ENCODE measurements at regions of chr2 and their contacts with region 1.

Region 1: GRCh38 chr2:213151437-213152064 is at the start of gene IKZF2:
- DNase-seq: peak; percentile 93
- H3K4me3 ChIP-seq: peak within 1 kb of the TSS; percentile 78 to 94 (median 88)
- H3K27ac ChIP-seq: peak within 1 kb of the TSS; percentile 94 to 99 (median 97)
- H3K4me1 ChIP-seq: peaks cover 6 to 32% (median 30%) of the 10 kb centered on the region in 4 donors
- H3K27me3 ChIP-seq: no peaks in the 10 kb centered on the region
- CTCF ChIP-seq: no peak
- EP300 ChIP-seq: no peak
- POLR2A ChIP-seq: no peak
- total RNA-seq, gene IKZF2: 6.5 to 11.2 (median 8.8) TPM

Region 2: GRCh38 chr2:212686285-212686895 is 465.2 kb before region 1 on chr2:
- intact Hi-C with region 1: loop called (anchors 5 kb)
- DNase-seq: no peak
- H3K4me3 ChIP-seq: no peak overlapping the region
- H3K27ac ChIP-seq: no peak overlapping the region
- H3K4me1 ChIP-seq: peaks cover 0 to 4% (median 1%) of the 10 kb centered on the region in 4 donors
- H3K27me3 ChIP-seq: no peaks in the 10 kb centered on the region
- CTCF ChIP-seq: peak; percentile 78 to 85 (median 79)
- EP300 ChIP-seq: no peak
- POLR2A ChIP-seq: no peak

Region 3: DNA sequence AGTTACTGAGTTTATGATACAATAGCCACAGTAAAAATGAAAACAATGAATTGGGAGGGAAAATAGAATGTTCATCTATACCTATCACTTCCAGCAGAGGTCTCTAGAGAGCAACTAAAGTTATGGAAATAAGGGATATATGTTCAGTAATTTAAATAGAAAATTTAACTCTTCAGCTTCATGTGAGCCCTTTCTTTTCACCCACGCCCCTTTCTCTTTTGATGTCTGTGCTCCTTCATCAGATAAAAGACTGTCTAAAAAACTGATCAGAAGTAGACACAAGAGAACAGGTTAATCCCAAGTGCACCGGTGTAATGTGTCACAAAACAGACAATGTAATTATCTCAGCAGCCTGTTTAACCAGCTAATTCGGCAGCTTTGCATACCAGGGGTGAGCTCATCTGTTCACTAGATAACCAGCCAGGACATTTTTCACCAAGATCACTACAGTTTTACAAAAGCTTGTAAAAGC is 374.5 kb before region 1 on chr2:
- intact Hi-C with region 1: loop called (anchors 2 kb)
- DNase-seq: no peak
- H3K4me3 ChIP-seq: no peak overlapping the region
- H3K27ac ChIP-seq: no peak overlapping the region
- H3K4me1 ChIP-seq: peaks cover 0 to 6% (median 3%) of the 10 kb centered on the region in 4 donors
- H3K27me3 ChIP-seq: no peaks in the 10 kb centered on the region
- CTCF ChIP-seq: peak; percentile 65 to 73 (median 68)
- EP300 ChIP-seq: no peak
- POLR2A ChIP-seq: no peak

Region 4: GRCh38 chr2:212892193-212892592 is 259.4 kb before region 1 on chr2:
- intact Hi-C with region 1: loop called (anchors 5 kb)
- DNase-seq: no peak
- H3K4me3 ChIP-seq: no peak overlapping the region
- H3K27ac ChIP-seq: no peak overlapping the region
- H3K4me1 ChIP-seq: peaks cover 0 to 6% (median 0%) of the 10 kb centered on the region in 4 donors
- H3K27me3 ChIP-seq: no peaks in the 10 kb centered on the region
- CTCF ChIP-seq: peak; percentile 33 to 48 (median 42)
- EP300 ChIP-seq: no peak
- POLR2A ChIP-seq: no peak